ENCODE measurements at regions of chr14 and their contacts with region 1.

Region 1: DNA sequence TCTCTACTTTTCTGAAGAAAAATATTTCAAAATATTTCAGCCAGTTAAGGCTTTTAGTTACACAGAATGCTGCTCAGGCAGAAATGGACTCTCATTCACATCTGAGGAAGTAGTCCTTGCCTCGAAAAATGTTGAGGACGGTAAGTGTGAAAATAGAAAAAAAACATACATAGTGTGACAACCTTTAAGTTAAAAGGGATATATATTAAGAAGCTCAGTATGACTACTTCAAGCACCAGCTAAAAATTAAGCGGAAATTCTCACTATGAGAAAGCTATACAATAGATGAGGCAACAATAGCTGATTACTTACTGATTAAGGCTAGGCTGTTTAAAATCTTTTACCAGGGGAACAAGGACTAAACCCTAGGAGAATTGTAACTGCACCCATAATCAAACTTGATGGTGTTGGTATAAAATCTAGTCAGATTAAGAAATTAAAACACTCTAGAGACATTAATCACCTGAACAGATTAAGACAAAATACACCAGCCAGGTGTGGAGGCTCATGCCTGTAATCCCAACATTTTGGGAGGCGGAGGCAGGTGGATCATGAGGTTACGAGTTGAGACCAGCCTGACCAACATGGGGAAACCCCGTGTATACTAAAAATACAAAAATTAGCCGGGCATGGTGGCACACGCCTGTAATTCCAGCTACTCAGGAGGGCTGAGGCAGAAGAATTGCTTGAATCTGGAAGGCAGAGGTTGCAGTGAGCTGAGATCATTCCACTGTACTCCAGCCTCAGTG is 53.9 kb downstream of the HNRNPC start:
- DNase-seq: no peak
- H3K4me3 Mint-ChIP-seq: no peak overlapping the region
- H3K27ac Mint-ChIP-seq: peak overlapping the region; percentile 69
- H3K4me1 Mint-ChIP-seq: peaks cover 56% of the 10 kb centered on the region
- H3K27me3 Mint-ChIP-seq: no peaks in the 10 kb centered on the region

Region 2: GRCh38 chr14:21203470-21204166 is 11.7 kb before region 1 on chr14:
- CTCF ChIA-PET with region 1: no interaction called
- POLR2A ChIA-PET with region 1: interaction called, 12 read pairs
- DNase-seq: no peak
- H3K4me3 Mint-ChIP-seq: no peak overlapping the region
- H3K27ac Mint-ChIP-seq: no peak overlapping the region
- H3K4me1 Mint-ChIP-seq: peaks cover 2% of the 10 kb centered on the region
- H3K27me3 Mint-ChIP-seq: no peaks in the 10 kb centered on the region

Region 3: DNA sequence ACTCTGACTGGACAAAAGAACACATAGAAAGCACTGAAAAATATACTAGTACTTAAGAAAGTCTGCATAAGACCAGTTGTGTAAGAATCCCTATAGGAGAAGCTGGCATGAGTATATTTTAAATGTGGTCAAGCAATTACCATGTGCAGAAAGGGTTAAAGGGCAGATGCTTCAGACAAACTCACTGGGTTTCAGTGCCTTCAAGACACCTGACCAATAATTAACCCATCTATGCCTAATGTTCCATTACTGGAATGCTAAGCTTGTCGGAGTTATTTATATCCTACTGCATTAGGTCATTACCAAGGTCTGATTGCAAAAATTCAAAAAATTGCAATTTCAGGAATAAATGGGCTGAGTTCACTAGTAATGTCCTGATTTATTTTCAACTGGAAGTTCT is 12.7 kb after region 1 on chr14:
- CTCF ChIA-PET with region 1: interaction called, 6 read pairs
- POLR2A ChIA-PET with region 1: interaction called, 24 read pairs
- DNase-seq: no peak
- H3K4me3 Mint-ChIP-seq: no peak overlapping the region
- H3K27ac Mint-ChIP-seq: peak overlapping the region; percentile 47
- H3K4me1 Mint-ChIP-seq: peaks cover 76% of the 10 kb centered on the region
- H3K27me3 Mint-ChIP-seq: no peaks in the 10 kb centered on the region

Region 4: DNA sequence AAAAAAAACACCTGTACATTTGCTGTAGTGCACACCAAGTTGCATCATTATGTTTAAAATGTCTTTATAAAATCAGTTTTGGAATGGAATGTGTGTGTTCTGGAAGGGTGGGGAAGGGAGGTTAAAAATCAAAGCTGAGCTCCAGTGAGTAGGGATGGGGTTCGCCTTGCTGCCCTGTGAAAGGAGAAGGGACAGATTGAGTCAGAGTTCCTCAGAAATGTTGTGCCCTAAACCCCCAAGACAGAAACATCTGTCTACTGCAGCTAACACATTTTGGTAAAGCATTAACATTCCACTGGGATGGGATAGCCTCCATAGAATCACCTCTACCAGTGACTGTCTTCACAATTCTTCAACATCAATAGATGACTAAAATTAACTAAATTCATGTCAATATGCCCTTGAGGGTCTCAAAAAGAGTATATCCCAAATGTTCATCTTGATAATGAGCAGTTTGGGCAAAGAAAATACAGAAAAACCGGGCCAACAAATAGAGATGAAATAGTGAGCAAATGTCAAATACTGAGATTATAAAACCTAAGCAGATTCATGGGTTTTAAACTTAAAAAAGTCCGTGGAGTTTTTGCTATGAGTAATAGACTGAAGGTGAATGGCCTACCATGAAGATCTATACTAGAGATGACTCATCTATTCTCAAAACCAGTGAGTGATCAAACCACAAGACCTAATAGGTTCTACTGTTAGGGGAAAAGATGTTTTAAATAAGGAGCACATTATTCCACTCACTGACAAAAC is 48.5 kb after region 1 on chr14:
- CTCF ChIA-PET with region 1: no interaction called
- POLR2A ChIA-PET with region 1: interaction called, 13 read pairs
- DNase-seq: no peak
- H3K4me3 Mint-ChIP-seq: peak overlapping the region; percentile 61
- H3K27ac Mint-ChIP-seq: peak overlapping the region; percentile 99
- H3K4me1 Mint-ChIP-seq: peaks cover 75% of the 10 kb centered on the region
- H3K27me3 Mint-ChIP-seq: no peaks in the 10 kb centered on the region